Activated naive CD4-positive, alpha-beta T cell treated with anti-CD3 and anti-CD28 coated beads for 36 hours (primary cell): ENCODE measurements at regions of chr6 and their contacts with region 1.

Region 1: DNA sequence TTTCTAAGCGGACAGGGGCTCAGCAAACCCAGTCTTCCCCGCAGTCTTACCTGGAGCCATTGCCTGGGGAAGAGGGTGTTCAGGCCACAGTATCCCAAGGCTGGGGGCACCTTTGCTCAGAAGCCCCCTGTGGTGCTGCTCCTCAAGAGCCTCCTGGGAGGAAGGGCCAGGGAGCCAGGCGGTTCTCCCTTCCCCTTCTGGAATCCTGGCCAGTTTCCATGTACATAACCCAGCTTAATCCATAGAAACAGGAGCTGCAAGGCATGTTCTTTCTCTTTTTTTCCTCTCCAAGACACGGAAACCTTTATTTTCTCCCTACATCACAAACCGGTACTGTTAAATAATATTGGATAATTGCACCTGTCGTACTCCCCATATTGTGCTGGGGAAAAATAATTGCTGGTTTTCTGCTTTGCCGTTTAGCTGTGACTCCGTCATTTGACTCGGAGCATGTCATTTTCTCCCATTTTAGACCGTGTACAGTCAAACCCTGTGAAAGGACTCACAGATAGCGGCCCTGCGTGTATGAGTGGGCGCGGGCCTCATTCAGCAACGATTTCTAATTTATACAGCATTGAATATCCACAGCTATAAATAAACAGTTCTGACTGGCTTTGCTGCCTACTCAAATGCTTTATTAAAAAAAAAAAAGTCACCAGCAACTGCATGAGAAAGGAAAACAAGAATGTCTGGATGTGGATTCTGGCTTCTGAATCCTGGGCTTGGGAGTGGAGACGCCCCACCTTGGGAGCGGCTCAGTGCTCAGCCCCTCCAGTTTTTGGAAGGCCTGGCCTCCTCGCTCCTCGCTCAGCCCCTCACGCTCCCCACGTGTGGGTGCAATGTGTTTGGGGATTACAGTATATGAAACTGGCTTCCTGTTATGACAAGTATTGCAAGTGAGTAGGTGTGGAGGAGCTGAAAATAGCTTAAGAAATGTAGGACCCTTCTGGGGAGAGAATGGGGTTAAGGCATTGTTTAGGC is 67.3 kb downstream of the ADTRP start:
- DNase-seq: peak; percentile 79
- H3K4me3 Mint-ChIP-seq: peak overlapping the region; percentile 57
- H3K27ac Mint-ChIP-seq: peak overlapping the region; percentile 97
- H3K4me1 Mint-ChIP-seq: peaks cover 79% of the 10 kb centered on the region
- H3K27me3 Mint-ChIP-seq: no peaks in the 10 kb centered on the region

Region 2: DNA sequence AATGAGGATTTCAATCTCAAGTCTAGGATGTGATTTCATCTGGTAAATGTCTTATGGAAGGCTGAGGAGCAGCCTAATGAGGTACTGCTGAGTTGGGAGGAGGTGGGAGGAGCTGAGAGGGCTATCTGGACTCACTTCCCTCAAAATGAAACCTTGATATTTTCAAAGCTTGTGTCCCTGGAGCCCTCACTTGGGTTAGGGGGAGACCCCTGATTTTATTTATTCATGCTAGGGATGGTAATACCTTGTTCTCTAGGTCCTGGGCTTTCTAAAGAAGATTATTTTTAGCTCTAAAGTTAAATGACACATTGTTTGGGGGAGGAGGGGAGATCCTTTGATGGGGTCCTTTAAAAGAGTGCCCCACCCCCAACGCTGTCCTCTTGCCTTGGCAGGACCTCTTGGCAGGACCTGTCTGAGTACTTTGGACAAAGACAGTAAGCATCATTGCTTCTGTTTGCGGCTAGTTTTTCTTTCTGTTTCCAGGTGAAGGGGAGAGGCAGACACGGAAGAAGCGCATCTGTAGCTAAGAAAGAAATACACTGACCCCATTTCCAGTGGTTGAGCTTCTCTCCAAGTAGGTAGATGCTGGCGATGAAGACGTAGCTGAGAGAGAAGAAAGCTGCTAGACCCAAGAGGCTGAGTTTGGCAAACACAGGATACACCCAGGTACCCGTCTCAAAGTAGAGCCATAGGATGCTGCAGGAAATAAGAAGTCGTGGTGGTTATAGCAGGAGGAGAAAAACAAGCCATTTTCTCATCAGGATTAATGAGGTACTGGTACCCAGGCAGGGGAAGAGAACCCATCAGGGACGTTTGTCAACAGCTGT is 11.7 kb after region 1 on chr6:
- CTCF ChIA-PET with region 1: interaction called, 10 read pairs
- intact Hi-C with region 1: loop called (anchors 1 kb)
- DNase-seq: peak; percentile 34
- H3K4me3 Mint-ChIP-seq: peak overlapping the region; percentile 69
- H3K27ac Mint-ChIP-seq: peak overlapping the region; percentile 89
- H3K4me1 Mint-ChIP-seq: peaks cover 67% of the 10 kb centered on the region
- H3K27me3 Mint-ChIP-seq: no peaks in the 10 kb centered on the region

Region 3: GRCh38 chr6:11766589-11767450 is 55.5 kb after region 1 on chr6:
- CTCF ChIA-PET with region 1: no interaction called
- intact Hi-C with region 1: loop called (anchors 2 kb)
- DNase-seq: no peak
- H3K4me3 Mint-ChIP-seq: no peak overlapping the region
- H3K27ac Mint-ChIP-seq: no peak overlapping the region
- H3K4me1 Mint-ChIP-seq: peaks cover 30% of the 10 kb centered on the region
- H3K27me3 Mint-ChIP-seq: peaks cover 2% of the 10 kb centered on the region

Region 4: DNA sequence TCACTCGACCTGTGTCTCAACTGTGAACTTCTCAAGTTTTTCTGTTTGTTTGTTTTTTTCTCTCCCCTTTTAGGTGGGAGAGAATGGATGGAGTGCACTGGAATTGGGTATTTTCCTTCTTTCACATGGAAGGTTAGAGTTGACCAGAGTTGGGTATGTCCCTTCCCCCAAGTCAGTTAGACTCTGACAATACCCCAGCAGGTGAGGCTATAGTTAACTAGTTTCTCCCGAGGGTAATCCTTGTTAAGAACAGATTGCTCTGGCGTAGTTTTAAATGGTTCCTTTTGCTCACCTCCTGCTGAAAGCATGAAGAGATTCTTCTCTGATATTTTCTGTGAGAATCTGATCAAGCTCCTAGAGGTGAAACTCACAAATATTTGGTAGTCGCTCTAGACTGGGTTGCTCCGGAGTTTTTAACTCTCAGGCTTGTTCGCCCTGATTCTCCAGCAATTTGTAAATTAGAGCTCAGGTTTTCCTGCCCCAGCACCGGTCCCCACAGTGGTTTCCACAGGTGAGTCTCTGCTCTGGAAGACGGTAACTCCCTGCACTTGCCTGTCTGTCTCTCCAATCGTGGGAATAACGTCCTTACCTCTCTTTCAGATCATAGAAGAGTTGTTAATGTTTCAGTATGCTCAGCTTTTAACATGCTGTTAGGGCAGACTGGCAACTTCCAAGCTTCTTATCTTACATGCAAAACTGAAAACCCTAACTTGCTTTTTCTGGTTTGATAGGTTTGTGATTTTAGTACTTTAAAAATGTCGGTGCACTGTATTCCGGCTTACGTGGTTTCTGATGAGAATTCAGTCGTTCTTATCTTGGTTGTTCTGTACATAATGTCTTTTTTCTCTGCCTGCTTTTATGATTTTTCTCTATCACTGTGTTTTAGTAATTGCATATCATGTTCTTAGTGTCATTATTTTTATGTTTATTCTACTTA is 189.6 kb after region 1 on chr6:
- CTCF ChIA-PET with region 1: no interaction called
- intact Hi-C with region 1: loop called (anchors 5 kb)
- DNase-seq: no peak
- H3K4me3 Mint-ChIP-seq: peak overlapping the region; percentile 30
- H3K27ac Mint-ChIP-seq: no peak overlapping the region
- H3K4me1 Mint-ChIP-seq: peaks cover 20% of the 10 kb centered on the region
- H3K27me3 Mint-ChIP-seq: no peaks in the 10 kb centered on the region

Region 5: GRCh38 chr6:12051861-12052368 is 340.6 kb after region 1 on chr6:
- CTCF ChIA-PET with region 1: no interaction called
- intact Hi-C with region 1: loop called (anchors 1 kb)
- DNase-seq: peak; percentile 83
- H3K4me3 Mint-ChIP-seq: peak overlapping the region; percentile 36
- H3K27ac Mint-ChIP-seq: peak overlapping the region; percentile 88
- H3K4me1 Mint-ChIP-seq: peaks cover 76% of the 10 kb centered on the region
- H3K27me3 Mint-ChIP-seq: no peaks in the 10 kb centered on the region

Region 6: GRCh38 chr6:13427801-13428582 is 1716.7 kb after region 1 on chr6:
- CTCF ChIA-PET with region 1: no interaction called
- intact Hi-C with region 1: loop called (anchors 10 kb)
- DNase-seq: peak; percentile 90
- H3K4me3 Mint-ChIP-seq: peak overlapping the region; percentile 53
- H3K27ac Mint-ChIP-seq: peak overlapping the region; percentile 85
- H3K4me1 Mint-ChIP-seq: peaks cover 68% of the 10 kb centered on the region
- H3K27me3 Mint-ChIP-seq: no peaks in the 10 kb centered on the region